ENCODE measurements at regions of chrX and their contacts with region 1.

Region 1: GRCh38 chrX:18674788-18675735 is 3.2 kb upstream of the RS1 start:
- DNase-seq: peak; percentile 80 to 87 (median 86)
- H3K4me3 ChIP-seq: peak overlapping the region; percentile 11 to 54
- H3K4me3 Mint-ChIP-seq: peak overlapping the region; percentile 78 to 87 (median 84)
- H3K27ac ChIP-seq: peak overlapping the region; percentile 67
- H3K27ac Mint-ChIP-seq: peak overlapping the region; percentile 46 to 97 (median 82)
- H3K4me1 ChIP-seq: no peaks in the 10 kb centered on the region
- H3K4me1 Mint-ChIP-seq: peaks cover 4 to 16% (median 8%) of the 10 kb centered on the region in 4 donors
- H3K27me3 ChIP-seq: no peaks in the 10 kb centered on the region
- H3K27me3 Mint-ChIP-seq: no peaks in the 10 kb centered on the region

Region 2: GRCh38 chrX:17736856-17737706 is 938.0 kb before region 1 on chrX and contains the start of gene SCML1:
- CTCF ChIA-PET with region 1: no interaction called
- POLR2A ChIA-PET with region 1: no interaction called
- intact Hi-C with region 1: loop called (anchors 5 kb)
- DNase-seq: peak; percentile 78 to 90 (median 82)
- H3K4me3 ChIP-seq: peak within 1 kb of the TSS in 1 of 2 donors; percentile 50
- H3K4me3 Mint-ChIP-seq: peak within 1 kb of the TSS; percentile 86 to 97 (median 90)
- H3K27ac ChIP-seq: peak within 1 kb of the TSS; percentile 73
- H3K27ac Mint-ChIP-seq: peak within 1 kb of the TSS; percentile 86 to 98 (median 90)
- H3K4me1 ChIP-seq: peaks cover 15% of the 10 kb centered on the region
- H3K4me1 Mint-ChIP-seq: peaks cover 11 to 33% (median 22%) of the 10 kb centered on the region in 4 donors
- H3K27me3 ChIP-seq: no peaks in the 10 kb centered on the region
- H3K27me3 Mint-ChIP-seq: peaks cover 0 to 3% of the 10 kb centered on the region in 2 donors
- total RNA-seq, gene SCML1: 14.4 to 18.0 TPM

Region 3: GRCh38 chrX:18354369-18355223 is 320.5 kb before region 1 on chrX and contains the start of gene SCML2:
- CTCF ChIA-PET with region 1: no interaction called
- POLR2A ChIA-PET with region 1: no interaction called
- intact Hi-C with region 1: loop called (anchors 2 kb)
- DNase-seq: peak; percentile 15 to 36 (median 23)
- H3K4me3 ChIP-seq: peak within 1 kb of the TSS in 1 of 2 donors; percentile 32
- H3K4me3 Mint-ChIP-seq: peak within 1 kb of the TSS; percentile 82 to 87 (median 84)
- H3K27ac ChIP-seq: no peak within 1 kb of the TSS
- H3K27ac Mint-ChIP-seq: peak within 1 kb of the TSS in 2 of 7 donors; percentile 37 to 57
- H3K4me1 ChIP-seq: peaks cover 4% of the 10 kb centered on the region
- H3K4me1 Mint-ChIP-seq: peaks cover 0 to 5% (median 2%) of the 10 kb centered on the region in 4 donors
- H3K27me3 ChIP-seq: no peaks in the 10 kb centered on the region
- H3K27me3 Mint-ChIP-seq: no peaks in the 10 kb centered on the region
- total RNA-seq, gene SCML2: 1.2 to 1.7 TPM

Region 4: GRCh38 chrX:18741677-18742076 is 66.6 kb after region 1 on chrX:
- CTCF ChIA-PET with region 1: no interaction called
- POLR2A ChIA-PET with region 1: no interaction called
- intact Hi-C with region 1: no loop called
- DNase-seq: no peak
- H3K4me3 ChIP-seq: no peak overlapping the region
- H3K4me3 Mint-ChIP-seq: no peak overlapping the region
- H3K27ac ChIP-seq: no peak overlapping the region
- H3K27ac Mint-ChIP-seq: no peak overlapping the region
- H3K4me1 ChIP-seq: no peaks in the 10 kb centered on the region
- H3K4me1 Mint-ChIP-seq: no peaks in the 10 kb centered on the region
- H3K27me3 ChIP-seq: no peaks in the 10 kb centered on the region
- H3K27me3 Mint-ChIP-seq: no peaks in the 10 kb centered on the region

Region 5: DNA sequence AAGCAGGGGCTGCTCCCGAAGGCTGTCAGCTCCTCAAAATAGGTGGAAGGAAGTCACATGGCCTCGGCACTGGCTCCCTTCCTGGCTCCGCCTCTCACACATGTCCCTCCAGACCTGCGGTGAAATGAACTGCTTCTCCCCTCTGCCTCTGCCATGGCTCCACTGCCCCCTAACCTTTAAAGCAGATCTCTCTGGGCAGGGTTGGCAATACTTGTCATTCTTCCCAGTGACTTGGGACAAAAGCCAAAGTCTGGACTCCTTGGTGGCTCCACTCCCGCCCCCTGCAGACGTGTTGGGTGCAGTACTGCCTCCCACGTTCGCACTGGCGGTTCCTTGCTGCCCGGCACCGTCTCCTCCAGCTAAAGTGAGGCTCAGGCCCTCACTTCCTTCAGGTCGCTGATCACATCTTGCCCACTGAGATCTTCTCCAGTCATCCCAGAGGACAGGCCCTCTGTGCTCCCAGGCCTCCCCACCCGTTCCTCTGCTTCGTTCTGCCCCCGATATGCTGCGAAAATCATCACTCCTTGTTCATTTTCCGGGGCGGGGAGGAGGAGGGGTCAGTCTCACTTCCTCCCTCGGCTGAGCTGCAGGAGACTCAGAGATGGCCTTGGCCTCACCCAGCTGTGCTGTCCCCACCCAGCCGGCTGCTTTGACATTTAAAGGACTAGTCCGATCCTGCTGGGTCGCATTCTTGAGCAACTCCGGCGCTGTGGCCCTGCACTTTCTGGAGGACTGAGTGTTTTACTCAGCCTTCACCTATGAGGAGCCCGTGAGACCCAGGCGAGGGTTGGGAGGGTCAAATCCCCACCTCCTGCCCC is 211.5 kb after region 1 on chrX:
- CTCF ChIA-PET with region 1: interaction called, 3 read pairs
- POLR2A ChIA-PET with region 1: no interaction called
- intact Hi-C with region 1: loop called (anchors 2 kb)
- DNase-seq: peak; percentile 32 to 42 (median 42)
- H3K4me3 ChIP-seq: peak overlapping the region in 1 of 2 donors; percentile 56
- H3K4me3 Mint-ChIP-seq: peak overlapping the region; percentile 84 to 94 (median 90)
- H3K27ac ChIP-seq: peak overlapping the region; percentile 28
- H3K27ac Mint-ChIP-seq: peak overlapping the region; percentile 82 to 98 (median 92)
- H3K4me1 ChIP-seq: peaks cover 14% of the 10 kb centered on the region
- H3K4me1 Mint-ChIP-seq: peaks cover 12 to 32% (median 20%) of the 10 kb centered on the region in 4 donors
- H3K27me3 ChIP-seq: no peaks in the 10 kb centered on the region
- H3K27me3 Mint-ChIP-seq: no peaks in the 10 kb centered on the region

Region 6: GRCh38 chrX:19334945-19335626 is 660.0 kb after region 1 on chrX:
- CTCF ChIA-PET with region 1: no interaction called
- POLR2A ChIA-PET with region 1: no interaction called
- intact Hi-C with region 1: loop called (anchors 2 kb)
- DNase-seq: peak in 3 of 5 donors; percentile 10 to 22 (median 20)
- H3K4me3 ChIP-seq: no peak overlapping the region
- H3K4me3 Mint-ChIP-seq: no peak overlapping the region
- H3K27ac ChIP-seq: no peak overlapping the region
- H3K27ac Mint-ChIP-seq: peak overlapping the region in 4 of 7 donors; percentile 22 to 73 (median 36)
- H3K4me1 ChIP-seq: no peaks in the 10 kb centered on the region
- H3K4me1 Mint-ChIP-seq: peaks cover 0 to 3% (median under 1%) of the 10 kb centered on the region in 4 donors
- H3K27me3 ChIP-seq: no peaks in the 10 kb centered on the region
- H3K27me3 Mint-ChIP-seq: peaks cover 0 to 2% of the 10 kb centered on the region in 2 donors

Region 7: DNA sequence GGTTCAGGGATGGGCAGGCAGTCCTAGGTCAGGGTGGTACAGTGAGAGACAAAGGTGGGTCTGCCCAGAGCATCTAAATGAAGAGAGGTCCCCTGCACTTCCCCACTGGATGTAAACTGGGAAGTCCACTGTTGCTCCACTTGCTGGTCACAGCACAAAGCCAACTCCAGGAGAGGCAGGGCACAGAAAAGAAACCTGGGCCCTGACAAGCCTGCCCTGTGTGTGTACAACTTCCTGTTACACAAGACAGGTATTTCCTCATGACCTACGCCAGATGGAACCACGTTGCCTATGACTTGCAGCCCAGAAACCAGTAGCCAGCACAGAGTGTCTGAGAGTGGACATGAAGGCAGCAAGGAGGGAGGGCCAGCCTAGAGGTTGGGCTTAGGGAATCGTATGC is 1050.6 kb after region 1 on chrX:
- CTCF ChIA-PET with region 1: no interaction called
- POLR2A ChIA-PET with region 1: no interaction called
- intact Hi-C with region 1: no loop called
- DNase-seq: peak in 2 of 5 donors; percentile 21 to 47
- H3K4me3 ChIP-seq: no peak overlapping the region
- H3K4me3 Mint-ChIP-seq: peak overlapping the region in 7 of 8 donors; percentile 10 to 57 (median 39)
- H3K27ac ChIP-seq: peak overlapping the region; percentile 9
- H3K27ac Mint-ChIP-seq: peak overlapping the region; percentile 43 to 95 (median 77)
- H3K4me1 ChIP-seq: peaks cover 73% of the 10 kb centered on the region
- H3K4me1 Mint-ChIP-seq: peaks cover 30 to 80% (median 61%) of the 10 kb centered on the region in 4 donors
- H3K27me3 ChIP-seq: no peaks in the 10 kb centered on the region
- H3K27me3 Mint-ChIP-seq: no peaks in the 10 kb centered on the region